ENCODE measurements at regions of chr13 and their contacts with region 1.

Region 1: GRCh38 chr13:37729876-37730275 is 131.3 kb upstream of the POSTN start:
- DNase-seq: no peak
- ATAC-seq: no peak
- H3K4me3 ChIP-seq: no peak overlapping the region
- H3K27ac ChIP-seq: no peak overlapping the region
- H3K4me1 ChIP-seq: peaks cover 3% of the 10 kb centered on the region; the same call in 1 of the 2 replicates
- H3K27me3 ChIP-seq: no peaks in the 10 kb centered on the region
- CTCF ChIP-seq: no peak
- POLR2A ChIP-seq: no peak
- RAD21 ChIP-seq: no peak

Region 2: GRCh38 chr13:36841391-36841790 is 888.5 kb before region 1 on chr13:
- CTCF ChIA-PET with region 1: no interaction called
- POLR2A ChIA-PET with region 1: interaction called, 10 read pairs
- dilution Hi-C with region 1: no loop called
- in situ Hi-C with region 1: no loop called
- intact Hi-C with region 1: no loop called
- DNase-seq: no peak
- ATAC-seq: no peak
- H3K4me3 ChIP-seq: no peak overlapping the region
- H3K27ac ChIP-seq: no peak overlapping the region
- H3K4me1 ChIP-seq: no peaks in the 10 kb centered on the region
- H3K27me3 ChIP-seq: no peaks in the 10 kb centered on the region
- CTCF ChIP-seq: peak; percentile 17; the same call in 1 of the 2 replicates
- POLR2A ChIP-seq: no peak
- RAD21 ChIP-seq: no peak